ENCODE measurements at regions of chr18 and their contacts with region 1.

Region 1: GRCh38 chr18:12376718-12377555 is at the start of gene AFG3L2:
- DNase-seq: peak; percentile 100
- H3K4me3 ChIP-seq: peak within 1 kb of the TSS; percentile 73 to 88
- H3K4me3 Mint-ChIP-seq: peak within 1 kb of the TSS; percentile 88 to 94 (median 92)
- H3K27ac ChIP-seq: peak within 1 kb of the TSS; percentile 98
- H3K27ac Mint-ChIP-seq: peak within 1 kb of the TSS; percentile 90 to 97 (median 93)
- H3K4me1 ChIP-seq: peaks cover 43% of the 10 kb centered on the region
- H3K4me1 Mint-ChIP-seq: peaks cover 27 to 54% (median 42%) of the 10 kb centered on the region in 4 donors
- H3K27me3 ChIP-seq: no peaks in the 10 kb centered on the region
- H3K27me3 Mint-ChIP-seq: no peaks in the 10 kb centered on the region
- total RNA-seq, gene AFG3L2: 31.4 to 33.1 TPM

Region 2: GRCh38 chr18:11728249-11728648 is 648.7 kb before region 1 on chr18:
- CTCF ChIA-PET with region 1: no interaction called
- POLR2A ChIA-PET with region 1: no interaction called
- intact Hi-C with region 1: no loop called
- DNase-seq: no peak
- H3K4me3 ChIP-seq: no peak overlapping the region
- H3K4me3 Mint-ChIP-seq: no peak overlapping the region
- H3K27ac ChIP-seq: no peak overlapping the region
- H3K27ac Mint-ChIP-seq: no peak overlapping the region
- H3K4me1 ChIP-seq: no peaks in the 10 kb centered on the region
- H3K4me1 Mint-ChIP-seq: peaks cover 0 to 3% (median 0%) of the 10 kb centered on the region in 4 donors
- H3K27me3 ChIP-seq: no peaks in the 10 kb centered on the region
- H3K27me3 Mint-ChIP-seq: peaks cover 11 to 12% of the 10 kb centered on the region in 2 donors

Region 3: DNA sequence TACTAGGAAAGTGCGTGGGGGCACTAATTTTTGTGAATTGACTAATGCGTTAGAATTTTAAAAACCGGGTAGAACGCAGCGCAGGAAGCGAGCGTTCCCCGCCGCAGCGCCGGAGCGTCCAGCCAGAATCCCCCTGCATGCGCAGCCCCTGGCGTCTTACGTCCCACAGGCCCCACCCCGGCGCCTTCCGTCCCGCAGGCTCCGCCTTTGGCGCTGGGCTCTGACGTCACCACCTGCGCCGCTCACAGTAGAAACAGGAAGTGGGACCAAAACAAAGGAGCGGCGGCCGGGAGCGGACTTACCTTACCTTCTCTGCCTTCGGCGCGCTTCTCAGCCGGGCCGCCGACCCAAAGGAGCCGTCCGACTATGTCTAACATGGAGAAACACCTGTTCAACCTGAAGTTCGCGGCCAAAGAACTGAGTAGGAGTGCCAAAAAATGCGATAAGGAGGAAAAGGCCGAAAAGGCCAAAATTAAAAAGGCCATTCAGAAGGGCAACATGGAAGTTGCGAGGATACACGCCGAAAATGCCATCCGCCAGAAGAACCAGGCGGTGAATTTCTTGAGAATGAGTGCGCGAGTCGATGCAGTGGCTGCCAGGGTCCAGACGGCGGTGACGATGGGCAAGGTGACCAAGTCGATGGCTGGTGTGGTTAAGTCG is 525.7 kb before region 1 on chr18 and contains the start of gene CHMP1B:
- CTCF ChIA-PET with region 1: no interaction called
- POLR2A ChIA-PET with region 1: interaction called, 10 read pairs
- intact Hi-C with region 1: loop called (anchors 1 kb)
- DNase-seq: peak; percentile 94 to 96 (median 95)
- H3K4me3 ChIP-seq: peak within 1 kb of the TSS; percentile 71 to 100
- H3K4me3 Mint-ChIP-seq: peak within 1 kb of the TSS; percentile 100
- H3K27ac ChIP-seq: peak within 1 kb of the TSS; percentile 98
- H3K27ac Mint-ChIP-seq: peak within 1 kb of the TSS; percentile 100
- H3K4me1 ChIP-seq: peaks cover 32% of the 10 kb centered on the region
- H3K4me1 Mint-ChIP-seq: peaks cover 16 to 57% (median 32%) of the 10 kb centered on the region in 4 donors
- H3K27me3 ChIP-seq: no peaks in the 10 kb centered on the region
- H3K27me3 Mint-ChIP-seq: no peaks in the 10 kb centered on the region
- total RNA-seq, gene CHMP1B: 44.3 to 46.9 TPM

Region 4: GRCh38 chr18:12391618-12392165 is 14.8 kb after region 1 on chr18:
- CTCF ChIA-PET with region 1: interaction called, 21 read pairs
- POLR2A ChIA-PET with region 1: no interaction called
- intact Hi-C with region 1: no loop called
- DNase-seq: peak in 4 of 5 donors; percentile 45 to 52 (median 50)
- H3K4me3 ChIP-seq: no peak overlapping the region
- H3K4me3 Mint-ChIP-seq: no peak overlapping the region
- H3K27ac ChIP-seq: no peak overlapping the region
- H3K27ac Mint-ChIP-seq: no peak overlapping the region
- H3K4me1 ChIP-seq: no peaks in the 10 kb centered on the region
- H3K4me1 Mint-ChIP-seq: no peaks in the 10 kb centered on the region
- H3K27me3 ChIP-seq: no peaks in the 10 kb centered on the region
- H3K27me3 Mint-ChIP-seq: peaks cover 5 to 12% of the 10 kb centered on the region in 2 donors

Region 5: DNA sequence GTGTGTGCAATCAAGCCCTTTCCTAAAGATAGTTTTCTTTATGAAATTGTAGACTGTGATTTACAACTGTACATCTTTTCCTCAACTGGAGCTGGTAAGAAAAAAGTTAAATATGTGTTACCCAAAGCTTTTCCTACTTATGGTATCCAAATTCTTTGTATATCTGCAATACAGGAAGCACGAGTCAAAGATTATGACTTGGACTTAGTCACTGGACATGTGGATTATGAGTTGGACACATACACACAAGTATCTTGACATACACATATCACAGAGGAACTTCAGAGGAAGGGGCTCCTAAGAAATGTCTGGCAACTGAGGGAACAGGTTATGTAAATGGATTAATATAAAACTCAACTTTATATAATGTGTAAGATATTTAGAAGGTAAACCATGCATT is 66.0 kb after region 1 on chr18:
- CTCF ChIA-PET with region 1: no interaction called
- POLR2A ChIA-PET with region 1: no interaction called
- intact Hi-C with region 1: no loop called
- DNase-seq: no peak
- H3K4me3 ChIP-seq: no peak overlapping the region
- H3K4me3 Mint-ChIP-seq: no peak overlapping the region
- H3K27ac ChIP-seq: no peak overlapping the region
- H3K27ac Mint-ChIP-seq: no peak overlapping the region
- H3K4me1 ChIP-seq: no peaks in the 10 kb centered on the region
- H3K4me1 Mint-ChIP-seq: no peaks in the 10 kb centered on the region
- H3K27me3 ChIP-seq: no peaks in the 10 kb centered on the region
- H3K27me3 Mint-ChIP-seq: no peaks in the 10 kb centered on the region

Region 6: GRCh38 chr18:12460874-12461273 is 83.9 kb after region 1 on chr18:
- CTCF ChIA-PET with region 1: no interaction called
- POLR2A ChIA-PET with region 1: no interaction called
- intact Hi-C with region 1: no loop called
- DNase-seq: no peak
- H3K4me3 ChIP-seq: no peak overlapping the region
- H3K4me3 Mint-ChIP-seq: no peak overlapping the region
- H3K27ac ChIP-seq: no peak overlapping the region
- H3K27ac Mint-ChIP-seq: no peak overlapping the region
- H3K4me1 ChIP-seq: no peaks in the 10 kb centered on the region
- H3K4me1 Mint-ChIP-seq: no peaks in the 10 kb centered on the region
- H3K27me3 ChIP-seq: no peaks in the 10 kb centered on the region
- H3K27me3 Mint-ChIP-seq: no peaks in the 10 kb centered on the region

Region 7: DNA sequence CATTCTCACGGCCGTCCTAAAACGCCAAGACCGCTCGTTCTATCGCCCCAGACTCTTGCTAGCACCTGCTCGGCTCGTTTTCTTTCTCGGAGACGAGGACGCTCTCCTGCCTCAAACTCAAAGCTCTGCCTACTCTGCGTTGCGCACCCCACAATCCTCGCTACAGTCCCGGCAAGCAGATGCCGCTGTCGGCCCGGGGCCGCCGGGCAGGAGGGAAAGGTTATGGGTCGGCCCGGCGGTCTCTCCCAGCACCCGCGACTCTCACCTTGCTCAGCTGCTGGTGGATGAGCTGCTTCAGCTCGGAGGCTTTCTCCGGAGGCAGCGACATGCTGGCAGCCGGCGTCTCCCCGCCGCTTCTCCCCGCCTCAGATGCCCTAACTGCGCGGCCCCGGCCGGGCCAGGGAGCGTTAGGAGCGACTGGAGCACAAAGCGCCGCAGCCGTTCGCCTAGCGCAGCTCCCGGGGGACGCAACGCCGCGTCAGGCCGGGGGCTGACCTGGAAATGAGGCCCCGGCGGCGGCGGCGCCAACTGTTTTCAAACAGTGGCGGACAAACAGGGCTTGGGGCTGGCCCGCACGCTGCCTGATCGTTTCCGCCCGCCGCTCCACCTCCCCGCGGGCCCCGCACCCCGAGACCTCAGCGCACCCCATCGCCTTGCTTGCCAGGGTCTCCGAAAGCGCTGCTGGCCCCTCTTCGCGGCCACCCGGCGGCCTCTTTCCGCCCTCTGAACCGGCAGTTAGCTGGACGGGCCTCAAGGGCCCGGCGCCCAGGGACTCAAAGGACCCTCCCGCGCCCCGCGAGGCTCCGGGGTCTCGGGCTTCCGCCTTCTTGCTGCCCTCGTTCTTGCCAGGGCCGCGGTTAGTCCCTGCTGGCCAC is 325.5 kb after region 1 on chr18 and contains the starts of genes CEP76 and PSMG2:
- CTCF ChIA-PET with region 1: no interaction called
- POLR2A ChIA-PET with region 1: interaction called, 40 read pairs
- intact Hi-C with region 1: loop called (anchors 1 kb)
- DNase-seq: peak; percentile 84 to 90 (median 87)
- H3K4me3 ChIP-seq: peak within 1 kb of the TSS; percentile 82 to 99
- H3K4me3 Mint-ChIP-seq: peak within 1 kb of the TSS; percentile 87 to 100 (median 98)
- H3K27ac ChIP-seq: peak within 1 kb of the TSS; percentile 93
- H3K27ac Mint-ChIP-seq: peak within 1 kb of the TSS; percentile 89 to 100 (median 96)
- H3K4me1 ChIP-seq: peaks cover 46% of the 10 kb centered on the region
- H3K4me1 Mint-ChIP-seq: peaks cover 32 to 60% (median 48%) of the 10 kb centered on the region in 4 donors
- H3K27me3 ChIP-seq: no peaks in the 10 kb centered on the region
- H3K27me3 Mint-ChIP-seq: no peaks in the 10 kb centered on the region
- total RNA-seq, gene CEP76: 9.9 to 13.1 TPM
- total RNA-seq, gene PSMG2: 59.7 to 62.0 TPM

Region 8: GRCh38 chr18:12990967-12991838 is 614.3 kb after region 1 on chr18 and contains the start of gene CEP192:
- CTCF ChIA-PET with region 1: no interaction called
- POLR2A ChIA-PET with region 1: interaction called, 13 read pairs
- intact Hi-C with region 1: loop called (anchors 1 kb)
- DNase-seq: peak; percentile 97 to 98 (median 98)
- H3K4me3 ChIP-seq: peak within 1 kb of the TSS; percentile 70 to 86
- H3K4me3 Mint-ChIP-seq: peak within 1 kb of the TSS; percentile 93 to 99 (median 98)
- H3K27ac ChIP-seq: peak within 1 kb of the TSS; percentile 93
- H3K27ac Mint-ChIP-seq: peak within 1 kb of the TSS; percentile 88 to 99 (median 97)
- H3K4me1 ChIP-seq: peaks cover 42% of the 10 kb centered on the region
- H3K4me1 Mint-ChIP-seq: peaks cover 0 to 29% (median 23%) of the 10 kb centered on the region in 4 donors
- H3K27me3 ChIP-seq: no peaks in the 10 kb centered on the region
- H3K27me3 Mint-ChIP-seq: no peaks in the 10 kb centered on the region
- total RNA-seq, gene CEP192: 42.5 to 45.5 TPM

Region 9: DNA sequence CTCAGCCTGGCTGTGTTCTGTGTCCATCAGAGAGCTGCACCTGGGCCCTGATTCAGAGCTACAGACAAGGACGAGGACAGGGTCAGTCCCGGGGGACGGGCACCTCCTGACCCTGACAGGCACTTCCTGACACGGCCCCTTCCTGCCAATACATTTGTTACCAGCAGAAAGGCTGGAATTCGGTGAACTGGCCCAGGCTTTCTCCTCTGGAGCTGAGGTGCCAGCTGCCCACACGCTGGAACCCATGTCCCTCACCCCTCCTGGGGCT is 1767.6 kb after region 1 on chr18:
- CTCF ChIA-PET with region 1: no interaction called
- POLR2A ChIA-PET with region 1: no interaction called
- intact Hi-C with region 1: loop called (anchors 10 kb)
- DNase-seq: no peak
- H3K4me3 ChIP-seq: no peak overlapping the region
- H3K4me3 Mint-ChIP-seq: no peak overlapping the region
- H3K27ac ChIP-seq: no peak overlapping the region
- H3K27ac Mint-ChIP-seq: no peak overlapping the region
- H3K4me1 ChIP-seq: no peaks in the 10 kb centered on the region
- H3K4me1 Mint-ChIP-seq: no peaks in the 10 kb centered on the region
- H3K27me3 ChIP-seq: no peaks in the 10 kb centered on the region
- H3K27me3 Mint-ChIP-seq: peaks cover 0 to 7% of the 10 kb centered on the region in 2 donors

Measured in CD4-positive, alpha-beta memory T cell (primary cell).